ENCODE measurements at regions of chr1 and their contacts with region 1.

Region 1: GRCh38 chr1:66929999-66930822 is 5.4 kb downstream of the MIER1 start:
- DNase-seq: peak; percentile 97
- H3K4me3 ChIP-seq: peak overlapping the region; percentile 87 to 91 (median 88)
- H3K27ac ChIP-seq: peak overlapping the region; percentile 98 to 99 (median 98)
- H3K4me1 ChIP-seq: peaks cover 39 to 75% (median 64%) of the 10 kb centered on the region in 4 donors
- H3K27me3 ChIP-seq: no peaks in the 10 kb centered on the region
- CTCF ChIP-seq: peak; percentile 45 to 54 (median 51)
- EP300 ChIP-seq: no peak
- POLR2A ChIP-seq: peak; percentile 43

Region 2: DNA sequence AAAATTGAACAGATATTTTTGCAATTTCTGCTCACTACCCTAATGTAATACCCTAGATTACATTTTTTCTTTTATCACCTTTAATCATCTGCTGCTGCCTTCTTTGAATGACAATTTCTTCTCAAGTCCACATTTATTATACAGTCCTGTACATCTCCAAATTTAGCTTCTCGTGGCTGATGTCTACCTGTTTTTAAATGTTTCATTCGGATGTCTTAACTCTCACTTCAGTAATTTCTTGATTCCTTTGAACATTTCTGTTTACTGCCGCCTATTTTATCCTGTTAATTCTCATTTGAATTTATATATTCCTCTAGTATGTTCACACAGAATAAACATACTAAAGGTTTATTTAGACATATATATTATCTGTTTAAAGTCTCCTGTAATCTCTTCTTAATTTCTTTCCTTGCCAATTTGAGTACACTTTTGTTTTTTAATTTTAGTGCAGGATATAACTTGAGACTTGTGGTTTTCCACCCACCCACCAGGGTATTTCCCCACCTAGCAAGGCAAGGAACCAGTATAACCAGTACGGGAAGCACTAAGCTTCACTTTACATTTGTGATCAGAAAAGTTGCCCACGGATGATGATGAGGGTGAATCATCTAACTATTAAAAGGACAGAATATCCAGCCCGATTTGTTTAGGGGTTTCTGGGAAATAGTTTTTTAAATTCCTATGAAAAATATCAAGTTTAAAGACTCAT is 141.8 kb before region 1 on chr1:
- intact Hi-C with region 1: no loop called
- DNase-seq: no peak
- H3K4me3 ChIP-seq: no peak overlapping the region
- H3K27ac ChIP-seq: no peak overlapping the region
- H3K4me1 ChIP-seq: no peaks in the 10 kb centered on the region
- H3K27me3 ChIP-seq: no peaks in the 10 kb centered on the region
- CTCF ChIP-seq: no peak
- EP300 ChIP-seq: no peak
- POLR2A ChIP-seq: no peak

Region 3: GRCh38 chr1:66981679-66982078 is 51.5 kb after region 1 on chr1:
- intact Hi-C with region 1: loop called (anchors 10 kb)
- DNase-seq: no peak
- H3K4me3 ChIP-seq: peak overlapping the region; percentile 30 to 48 (median 42)
- H3K27ac ChIP-seq: peak overlapping the region; percentile 5 to 69 (median 60)
- H3K4me1 ChIP-seq: peaks cover 8 to 18% (median 14%) of the 10 kb centered on the region in 4 donors
- H3K27me3 ChIP-seq: no peaks in the 10 kb centered on the region
- CTCF ChIP-seq: no peak
- EP300 ChIP-seq: no peak
- POLR2A ChIP-seq: no peak

Region 4: DNA sequence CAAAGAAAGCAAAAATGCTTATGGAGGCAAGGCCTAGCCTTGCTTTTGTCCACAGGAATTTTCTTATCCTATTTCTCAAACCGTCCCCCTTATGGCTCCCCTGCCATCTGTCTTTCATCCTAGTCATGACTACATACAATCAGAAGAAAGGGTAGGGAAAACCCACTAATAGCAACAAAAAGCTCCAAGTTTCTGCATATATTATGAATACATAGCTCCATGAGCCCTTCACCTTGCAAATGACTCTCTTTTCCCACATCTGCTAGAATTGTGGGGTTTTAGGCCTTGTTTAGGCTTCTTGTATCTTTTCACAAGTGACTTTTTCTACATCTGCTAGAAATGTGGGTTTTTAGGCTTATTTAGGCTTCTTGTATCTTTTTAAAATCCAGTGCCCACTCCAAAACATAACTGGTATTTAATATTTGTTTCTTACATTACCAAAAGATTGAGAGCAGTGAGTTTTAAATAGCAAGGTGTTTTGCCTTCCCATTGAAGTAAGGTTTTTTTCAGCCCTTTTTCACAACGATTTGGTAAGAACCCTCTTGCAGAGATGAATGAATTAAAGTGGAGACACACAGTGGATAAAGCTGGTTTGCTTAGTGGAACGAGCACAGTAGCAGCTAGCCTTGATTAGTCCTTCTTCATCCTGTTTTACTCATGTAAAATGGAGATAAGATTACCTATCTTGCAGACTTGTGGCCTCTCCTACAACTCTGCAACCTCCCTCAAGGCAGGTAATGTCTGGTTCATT is 759.2 kb after region 1 on chr1:
- intact Hi-C with region 1: no loop called
- DNase-seq: no peak
- H3K4me3 ChIP-seq: no peak overlapping the region
- H3K27ac ChIP-seq: no peak overlapping the region
- H3K4me1 ChIP-seq: peaks cover 16 to 22% (median 18%) of the 10 kb centered on the region in 4 donors
- H3K27me3 ChIP-seq: no peaks in the 10 kb centered on the region
- CTCF ChIP-seq: no peak
- EP300 ChIP-seq: no peak
- POLR2A ChIP-seq: no peak